ENCODE measurements at regions of chrX and their contacts with region 1.

Region 1: GRCh38 chrX:24241822-24242648 is 71.8 kb downstream of the SUPT20HL2 start:
- DNase-seq: peak; percentile 13 to 14
- H3K4me3 ChIP-seq: no peak overlapping the region
- H3K27ac ChIP-seq: no peak overlapping the region
- H3K4me1 ChIP-seq: no peaks in the 10 kb centered on the region
- H3K27me3 ChIP-seq: no peaks in the 10 kb centered on the region
- CTCF ChIP-seq: peak in 4 of 6 experiments; percentile 40 to 64 (median 54)
- POLR2A ChIP-seq: no peak

Region 2: GRCh38 chrX:24081661-24082264 is 160.3 kb before region 1 on chrX:
- intact Hi-C with region 1: loop called (anchors 10 kb)
- DNase-seq: peak; percentile 44 to 46
- H3K4me3 ChIP-seq: no peak overlapping the region
- H3K27ac ChIP-seq: no peak overlapping the region
- H3K4me1 ChIP-seq: no peaks in the 10 kb centered on the region
- H3K27me3 ChIP-seq: no peaks in the 10 kb centered on the region
- CTCF ChIP-seq: peak in 3 of 6 experiments; percentile 14 to 32 (median 15)
- POLR2A ChIP-seq: no peak

Region 3: DNA sequence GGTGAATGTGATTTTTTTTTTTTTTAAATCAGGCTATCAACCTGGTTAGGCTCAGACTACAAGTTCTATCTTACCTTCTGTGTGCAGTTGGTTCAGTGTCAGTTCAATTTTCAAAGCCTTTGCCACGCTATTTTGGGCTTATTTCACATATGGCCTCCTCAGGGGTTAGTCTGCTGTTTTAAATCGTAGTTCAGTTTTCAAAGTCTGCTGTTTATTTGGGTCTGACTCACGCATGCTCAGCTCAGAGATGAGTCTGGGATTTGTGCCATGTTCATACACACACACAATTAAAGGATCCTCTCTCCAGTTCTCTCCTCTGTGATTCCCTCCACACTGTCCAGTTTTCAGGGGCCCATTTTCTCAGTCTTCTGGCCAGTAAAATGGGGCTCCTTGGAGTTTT is 124.8 kb before region 1 on chrX:
- intact Hi-C with region 1: no loop called
- DNase-seq: peak; percentile 18 to 21
- H3K4me3 ChIP-seq: no peak overlapping the region
- H3K27ac ChIP-seq: no peak overlapping the region
- H3K4me1 ChIP-seq: peaks cover 0 to 11% of the 10 kb centered on the region in 2 donors
- H3K27me3 ChIP-seq: no peaks in the 10 kb centered on the region
- CTCF ChIP-seq: no peak
- POLR2A ChIP-seq: no peak

Region 4: GRCh38 chrX:24133280-24133679 is 108.8 kb before region 1 on chrX:
- intact Hi-C with region 1: loop called (anchors 10 kb)
- DNase-seq: no peak
- H3K4me3 ChIP-seq: no peak overlapping the region
- H3K27ac ChIP-seq: no peak overlapping the region
- H3K4me1 ChIP-seq: no peaks in the 10 kb centered on the region
- H3K27me3 ChIP-seq: no peaks in the 10 kb centered on the region
- CTCF ChIP-seq: no peak
- POLR2A ChIP-seq: no peak

Region 5: DNA sequence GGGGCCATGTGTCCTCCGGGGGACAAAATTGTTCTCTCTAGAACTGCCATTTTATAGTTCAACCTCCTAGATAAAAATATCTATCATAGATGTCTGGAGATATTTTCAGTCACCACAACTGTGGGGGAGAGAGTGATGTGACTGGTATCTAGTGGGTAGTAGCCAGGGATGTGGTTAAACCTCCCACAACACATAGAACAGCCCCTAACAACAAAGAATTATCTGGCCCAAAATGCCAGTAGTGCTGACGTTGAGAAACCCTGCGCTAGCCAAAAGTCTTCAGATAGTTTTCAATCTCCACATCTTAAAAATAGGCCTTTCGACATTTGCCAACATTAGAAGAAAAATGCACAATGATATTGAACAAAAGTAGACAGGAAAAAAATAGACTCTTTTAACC is 90.8 kb after region 1 on chrX:
- intact Hi-C with region 1: no loop called
- DNase-seq: no peak
- H3K4me3 ChIP-seq: no peak overlapping the region
- H3K27ac ChIP-seq: no peak overlapping the region
- H3K4me1 ChIP-seq: no peaks in the 10 kb centered on the region
- H3K27me3 ChIP-seq: no peaks in the 10 kb centered on the region
- CTCF ChIP-seq: no peak
- POLR2A ChIP-seq: no peak

Measured in thyroid gland (tissue), 4 donors.